ENCODE measurements at regions of chr13 and their contacts with region 1.

Region 1: DNA sequence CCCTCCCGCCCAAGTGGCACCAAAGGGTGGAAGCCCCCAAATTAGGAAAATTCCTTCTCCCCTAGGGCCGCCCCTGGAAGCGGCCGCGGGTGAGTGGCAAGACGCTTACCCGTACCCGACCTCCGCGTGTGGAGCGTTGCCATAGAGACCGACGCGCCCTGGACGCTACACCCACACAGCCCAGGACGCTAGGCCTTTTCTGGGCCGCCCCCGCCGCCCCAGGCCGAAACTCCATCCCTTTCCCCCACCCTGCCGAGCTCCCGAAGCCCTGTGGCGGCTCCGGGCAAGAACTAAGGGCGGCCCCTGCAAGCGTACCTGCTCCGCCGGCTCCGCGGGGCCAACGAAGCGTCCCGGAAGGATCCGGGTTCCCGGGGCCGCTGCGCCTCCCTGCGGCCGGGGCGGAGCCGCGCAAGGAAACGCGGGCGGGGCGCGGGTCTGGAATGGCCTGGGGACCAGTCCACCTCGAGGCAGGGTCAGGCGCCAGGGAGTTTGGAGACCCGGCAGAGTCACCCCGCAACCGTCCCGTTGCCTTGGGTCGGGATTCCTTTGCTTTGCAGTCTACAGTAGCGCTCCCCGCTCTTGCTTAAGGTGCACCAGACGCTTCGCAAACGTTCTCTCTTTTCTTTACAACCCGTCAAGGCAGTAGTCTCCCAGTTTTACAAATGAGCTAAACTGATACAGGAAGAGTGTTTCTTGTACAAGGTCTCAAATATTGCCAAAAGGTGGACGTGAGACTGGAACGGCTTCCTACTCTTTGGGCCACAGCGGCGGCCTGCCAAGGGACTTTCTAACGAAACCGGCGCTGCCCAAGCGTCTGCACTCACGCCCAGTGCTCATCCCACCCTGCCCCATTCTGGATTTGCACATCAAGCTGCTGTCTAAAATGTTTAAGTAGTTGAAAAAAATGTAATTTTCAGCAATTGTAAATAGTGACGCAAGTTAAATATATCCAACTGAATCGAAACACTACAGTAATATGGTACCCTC is at the start of gene NEK5:
- DNase-seq: peak; percentile 70
- H3K4me3 ChIP-seq: peak within 1 kb of the TSS; percentile 63
- H3K27ac ChIP-seq: no peak within 1 kb of the TSS
- H3K4me1 ChIP-seq: peaks cover 3% of the 10 kb centered on the region
- H3K27me3 ChIP-seq: no peaks in the 10 kb centered on the region
- CTCF ChIP-seq: peak; percentile 83
- total RNA-seq, gene NEK5: 0.13 TPM in 1 of 2 replicates, not detected in the other

Region 2: GRCh38 chr13:51148952-51149573 is 979.9 kb before region 1 on chr13:
- CTCF ChIA-PET with region 1: interaction called, 12 read pairs
- POLR2A ChIA-PET with region 1: no interaction called
- intact Hi-C with region 1: loop called (anchors 10 kb)
- DNase-seq: peak; percentile 90
- H3K4me3 ChIP-seq: peak overlapping the region; percentile 17
- H3K27ac ChIP-seq: peak overlapping the region; percentile 91
- H3K4me1 ChIP-seq: peaks cover 22% of the 10 kb centered on the region
- H3K27me3 ChIP-seq: no peaks in the 10 kb centered on the region
- CTCF ChIP-seq: peak; percentile 85

Region 3: DNA sequence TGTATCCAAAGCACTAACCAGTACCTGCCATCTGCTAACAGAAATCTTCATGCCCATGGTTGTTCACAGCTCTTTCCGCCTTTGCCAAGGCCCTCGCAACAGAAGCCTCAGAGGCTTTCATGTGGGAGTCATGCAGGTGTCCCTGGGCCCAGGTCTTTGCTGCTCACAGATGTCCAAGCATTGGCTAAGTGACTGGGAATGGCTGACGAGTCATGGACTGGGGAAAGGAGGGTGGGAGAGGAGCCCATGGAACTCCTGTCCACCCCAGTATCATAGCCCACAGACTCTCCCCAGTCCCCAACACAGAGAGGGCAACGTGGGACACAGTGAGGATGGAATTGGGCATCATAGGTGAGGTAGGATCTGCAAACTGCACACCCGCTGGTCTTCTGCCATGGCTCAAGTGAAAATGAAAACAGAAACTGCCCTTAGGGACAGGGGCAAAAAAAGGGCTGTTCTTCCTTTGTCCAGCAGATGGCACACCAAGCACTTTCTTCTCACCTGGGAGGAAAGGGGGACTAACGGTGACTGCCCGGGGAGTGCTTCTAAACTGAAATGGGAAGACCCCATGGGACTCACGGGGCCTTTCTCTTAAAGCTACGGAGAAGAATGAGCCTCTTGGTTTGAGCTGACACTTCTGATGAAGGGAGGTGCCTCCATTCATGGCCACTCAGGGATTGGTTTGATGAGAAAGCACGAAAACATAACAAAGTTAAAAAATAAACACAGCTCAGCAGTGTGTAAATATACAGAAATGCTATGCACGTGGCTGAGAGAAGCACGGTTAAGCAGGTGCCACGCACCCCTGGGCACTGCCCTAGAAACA is 314.0 kb before region 1 on chr13:
- CTCF ChIA-PET with region 1: no interaction called
- POLR2A ChIA-PET with region 1: no interaction called
- intact Hi-C with region 1: loop called (anchors 5 kb)
- DNase-seq: peak; percentile 75
- H3K4me3 ChIP-seq: no peak overlapping the region
- H3K27ac ChIP-seq: no peak overlapping the region
- H3K4me1 ChIP-seq: peaks cover under 1% of the 10 kb centered on the region
- H3K27me3 ChIP-seq: no peaks in the 10 kb centered on the region
- CTCF ChIP-seq: peak; percentile 84

Region 4: DNA sequence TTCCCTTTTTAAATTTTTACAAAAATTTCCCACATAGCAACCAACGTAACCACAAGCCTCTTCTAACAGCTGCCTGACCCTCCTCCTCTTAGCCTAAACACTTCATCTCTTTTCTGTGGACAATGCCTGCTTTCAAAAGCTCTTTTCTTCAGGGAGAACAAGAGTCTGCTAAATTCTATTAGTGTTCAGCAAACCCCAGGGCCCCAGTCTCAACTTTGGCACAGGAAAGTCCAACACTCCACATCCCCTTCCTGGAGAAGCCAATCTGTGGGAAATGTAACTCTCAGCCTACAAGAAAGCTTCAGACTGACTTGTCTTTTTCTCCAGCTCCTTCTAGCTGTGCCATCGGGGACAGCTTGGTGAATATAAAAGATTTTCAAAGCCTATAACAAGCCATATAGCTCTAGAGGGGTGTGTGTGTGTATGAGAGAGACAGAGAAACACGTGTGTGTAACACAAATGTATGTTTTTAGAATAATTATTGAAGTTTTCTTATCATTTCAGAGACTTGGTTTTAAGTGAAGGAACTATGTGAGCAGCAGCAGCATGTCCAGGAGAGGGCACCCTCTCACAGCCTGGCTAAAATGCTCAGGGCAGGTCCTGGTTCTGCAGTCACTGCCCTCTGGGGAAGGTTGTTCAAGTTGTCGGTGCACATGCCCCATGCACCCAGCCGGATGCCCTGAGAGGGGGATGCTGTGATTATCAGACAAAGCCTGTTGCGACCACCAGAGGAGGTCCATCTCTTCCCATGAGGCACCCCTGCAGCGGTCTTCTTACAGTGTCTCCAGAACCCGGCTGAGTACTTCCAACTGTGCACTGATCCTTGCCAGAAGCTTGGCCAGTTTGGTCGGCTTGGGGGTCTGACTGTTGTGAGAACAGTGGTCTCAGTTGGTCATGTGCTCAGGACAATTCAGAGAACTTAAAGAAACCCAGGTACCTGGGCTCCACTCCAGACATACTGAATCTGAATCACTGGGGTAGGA is 232.8 kb before region 1 on chr13:
- CTCF ChIA-PET with region 1: no interaction called
- POLR2A ChIA-PET with region 1: no interaction called
- intact Hi-C with region 1: loop called (anchors 1 kb)
- DNase-seq: peak; percentile 35
- H3K4me3 ChIP-seq: no peak overlapping the region
- H3K27ac ChIP-seq: no peak overlapping the region
- H3K4me1 ChIP-seq: no peaks in the 10 kb centered on the region
- H3K27me3 ChIP-seq: peaks cover 6% of the 10 kb centered on the region
- CTCF ChIP-seq: peak; percentile 66

Region 5: GRCh38 chr13:52001120-52001731 is 127.8 kb before region 1 on chr13:
- CTCF ChIA-PET with region 1: no interaction called
- POLR2A ChIA-PET with region 1: no interaction called
- intact Hi-C with region 1: loop called (anchors 2 kb)
- DNase-seq: peak; percentile 63
- H3K4me3 ChIP-seq: no peak overlapping the region
- H3K27ac ChIP-seq: no peak overlapping the region
- H3K4me1 ChIP-seq: no peaks in the 10 kb centered on the region
- H3K27me3 ChIP-seq: no peaks in the 10 kb centered on the region
- CTCF ChIP-seq: peak; percentile 69

Measured in A673 (cell line).